BJ (cell line): ENCODE measurements at regions of chr5 and their contacts with region 1.

Region 1: DNA sequence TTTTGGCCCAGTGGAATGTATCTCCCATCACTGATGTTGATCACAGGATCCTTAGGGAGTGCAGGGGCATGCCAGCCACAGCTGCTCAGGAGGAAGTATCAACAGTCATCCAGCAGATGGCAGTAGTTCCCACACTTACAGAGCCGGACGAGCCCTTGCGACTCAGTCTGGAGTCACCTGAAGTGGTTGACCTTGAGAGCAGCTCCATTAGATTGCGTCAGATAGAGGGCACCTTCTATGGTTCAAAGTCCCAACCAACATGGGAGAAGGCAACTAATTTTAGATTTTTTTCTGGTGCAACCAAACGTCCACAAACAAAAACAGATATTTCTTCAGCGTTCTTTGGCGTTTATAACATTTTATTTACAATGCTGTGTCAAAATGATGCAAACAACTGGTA is 124.5 kb downstream of the EGFLAM start:
- DNase-seq: no peak
- H3K4me3 ChIP-seq: no peak overlapping the region
- H3K27me3 ChIP-seq: peaks cover 11% of the 10 kb centered on the region
- CTCF ChIP-seq: peak; percentile 89

Region 2: DNA sequence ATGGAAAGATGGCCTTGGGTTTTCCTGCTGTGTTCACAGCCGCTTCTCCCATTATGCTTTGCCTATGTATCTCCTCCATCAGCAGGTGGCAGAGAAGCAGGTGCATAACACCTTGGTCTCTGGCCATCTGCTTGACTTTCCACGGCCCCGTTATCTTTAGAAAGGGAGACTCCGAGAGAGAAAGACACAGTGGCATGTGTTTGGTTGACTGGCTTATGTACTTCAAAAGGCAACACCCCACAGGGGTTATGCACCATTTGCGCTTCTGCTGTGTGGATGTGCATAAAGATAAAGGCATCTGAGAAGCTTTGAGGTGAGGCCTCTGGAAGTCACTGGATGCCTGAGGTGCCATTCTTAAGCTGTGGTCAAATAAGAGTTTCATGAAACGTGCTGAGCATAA is 13.9 kb after region 1 on chr5:
- CTCF ChIA-PET with region 1: interaction called, 11 read pairs
- POLR2A ChIA-PET with region 1: no interaction called
- DNase-seq: no peak
- H3K4me3 ChIP-seq: no peak overlapping the region
- H3K27me3 ChIP-seq: peaks cover 9% of the 10 kb centered on the region
- CTCF ChIP-seq: no peak

Region 3: DNA sequence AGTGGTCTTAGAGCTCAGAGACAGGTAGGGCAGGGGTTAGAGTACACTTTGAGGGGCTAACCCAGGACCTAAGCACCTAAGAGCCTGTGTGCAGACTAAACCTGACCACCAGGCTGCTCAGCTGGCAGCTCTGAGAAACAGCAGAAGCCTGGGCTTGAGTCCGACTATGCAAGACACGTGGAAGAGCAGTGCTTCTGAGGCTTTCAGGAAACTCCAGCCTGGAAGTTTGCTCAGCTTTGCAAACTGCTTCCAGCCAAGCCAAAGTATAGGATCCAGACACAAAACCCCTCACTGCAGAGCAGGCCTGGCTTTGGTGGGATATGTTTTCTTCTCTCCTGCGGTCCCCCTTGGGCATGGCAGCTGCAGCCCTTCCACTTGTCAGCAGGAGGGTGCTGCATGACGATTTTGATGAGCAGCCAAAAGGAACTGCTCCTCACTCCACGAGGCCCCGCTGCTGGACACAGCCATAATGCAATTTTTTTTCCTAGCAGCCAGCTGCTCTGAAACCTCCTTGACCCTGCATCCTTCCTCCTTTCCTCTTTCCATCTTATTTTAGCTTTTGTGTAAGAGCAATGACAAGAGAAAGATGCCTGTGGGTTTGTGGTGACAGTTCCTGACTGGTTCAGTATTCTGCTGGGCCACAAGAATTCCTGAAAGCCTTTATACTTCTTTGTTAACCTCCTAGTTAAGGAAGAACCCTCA is 50.4 kb after region 1 on chr5:
- CTCF ChIA-PET with region 1: interaction called, 17 read pairs
- POLR2A ChIA-PET with region 1: no interaction called
- DNase-seq: peak; percentile 63
- H3K4me3 ChIP-seq: no peak overlapping the region
- H3K27me3 ChIP-seq: no peaks in the 10 kb centered on the region
- CTCF ChIP-seq: 0 out of 2 replicates have a peak, but pooled peaks have one; percentile 19